ENCODE measurements at regions of chr2 and their contacts with region 1.

Region 1: DNA sequence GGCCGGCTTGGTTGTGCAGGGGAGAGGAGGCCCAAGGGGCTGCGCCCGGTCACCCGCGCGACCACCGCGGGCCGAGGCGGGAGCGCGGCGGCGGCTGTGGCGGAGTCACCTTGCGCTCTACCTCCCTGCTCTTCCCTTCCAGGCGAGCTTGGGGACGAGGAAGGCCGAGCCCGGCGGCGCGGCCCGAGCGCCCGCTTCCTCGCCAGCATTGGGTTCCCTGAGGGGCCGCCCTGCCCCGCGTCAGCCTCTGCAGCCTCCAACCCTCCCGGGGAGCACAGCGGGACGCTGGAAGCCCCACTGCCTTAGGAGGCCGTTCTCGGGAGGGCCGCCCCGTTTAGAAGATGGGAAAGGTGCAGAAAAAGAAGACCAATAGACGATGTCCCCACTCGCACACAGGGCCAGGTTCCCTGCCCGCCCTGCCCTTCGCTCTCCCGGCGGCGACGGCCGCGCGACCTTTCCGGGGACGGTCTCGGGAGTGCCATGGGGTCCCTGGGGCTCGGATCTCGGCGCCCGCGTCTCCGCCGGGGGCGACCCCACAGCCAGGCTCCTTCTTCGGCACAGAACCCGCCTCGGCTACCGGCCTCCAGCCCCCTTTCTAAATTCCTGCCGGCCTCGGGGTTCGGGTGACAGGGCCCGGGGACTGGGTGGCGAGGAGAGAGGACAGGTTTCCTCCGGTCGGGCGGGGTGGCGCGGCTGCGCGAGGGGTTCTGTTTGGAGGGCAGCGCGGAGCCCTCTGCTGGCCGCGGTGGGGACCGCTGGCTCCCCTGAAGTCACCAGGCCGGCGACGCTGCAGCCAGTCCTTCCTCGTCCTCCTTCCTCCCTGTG is 85.5 kb downstream of the HS6ST1 start:
- DNase-seq: peak; percentile 35
- ATAC-seq: peak; percentile 97
- H3K4me3 ChIP-seq: peak overlapping the region; percentile 62 to 78
- H3K27ac ChIP-seq: no peak overlapping the region; the same call in 1 of the 2 replicates
- H3K4me1 ChIP-seq: 0 out of 2 replicates have a peak, but pooled peaks cover 3% of the 10 kb centered on the region
- H3K27me3 ChIP-seq: no peaks in the 10 kb centered on the region
- CTCF ChIP-seq: peak; percentile 96

Region 2: GRCh38 chr2:128008074-128008672 is 225.0 kb before region 1 on chr2:
- CTCF ChIA-PET with region 1: no interaction called
- POLR2A ChIA-PET with region 1: no interaction called
- in situ Hi-C with region 1: no loop called
- intact Hi-C with region 1: no loop called
- DNase-seq: no peak
- ATAC-seq: no peak; the same call in 1 of the 2 replicates
- H3K4me3 ChIP-seq: no peak overlapping the region
- H3K27ac ChIP-seq: no peak overlapping the region
- H3K4me1 ChIP-seq: no peaks in the 10 kb centered on the region
- H3K27me3 ChIP-seq: no peaks in the 10 kb centered on the region
- CTCF ChIP-seq: no peak

Region 3: DNA sequence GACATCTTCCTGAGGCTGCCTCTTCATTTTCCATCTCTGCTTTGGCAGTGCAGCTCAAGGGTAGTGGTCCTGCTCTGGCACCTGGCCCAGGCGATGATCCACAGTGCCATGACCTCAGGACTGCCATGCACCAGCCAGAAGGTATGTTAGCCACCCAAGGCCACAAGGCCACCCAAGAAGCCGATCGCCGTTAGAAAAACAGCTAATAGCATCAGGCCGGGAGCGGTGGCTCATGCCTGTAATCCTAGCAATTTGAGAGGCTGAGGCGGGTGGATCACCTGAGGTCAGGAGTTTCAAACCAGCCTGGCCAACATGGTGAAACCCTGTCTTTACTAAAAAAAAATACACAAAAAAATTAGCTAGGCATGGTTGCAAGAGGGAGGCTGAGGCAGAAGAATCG is 170.6 kb before region 1 on chr2:
- CTCF ChIA-PET with region 1: no interaction called
- POLR2A ChIA-PET with region 1: no interaction called
- in situ Hi-C with region 1: no loop called
- intact Hi-C with region 1: loop called (anchors 2 kb)
- DNase-seq: no peak
- ATAC-seq: no peak
- H3K4me3 ChIP-seq: no peak overlapping the region
- H3K27ac ChIP-seq: no peak overlapping the region
- H3K4me1 ChIP-seq: no peaks in the 10 kb centered on the region
- H3K27me3 ChIP-seq: no peaks in the 10 kb centered on the region
- CTCF ChIP-seq: no peak

Region 4: DNA sequence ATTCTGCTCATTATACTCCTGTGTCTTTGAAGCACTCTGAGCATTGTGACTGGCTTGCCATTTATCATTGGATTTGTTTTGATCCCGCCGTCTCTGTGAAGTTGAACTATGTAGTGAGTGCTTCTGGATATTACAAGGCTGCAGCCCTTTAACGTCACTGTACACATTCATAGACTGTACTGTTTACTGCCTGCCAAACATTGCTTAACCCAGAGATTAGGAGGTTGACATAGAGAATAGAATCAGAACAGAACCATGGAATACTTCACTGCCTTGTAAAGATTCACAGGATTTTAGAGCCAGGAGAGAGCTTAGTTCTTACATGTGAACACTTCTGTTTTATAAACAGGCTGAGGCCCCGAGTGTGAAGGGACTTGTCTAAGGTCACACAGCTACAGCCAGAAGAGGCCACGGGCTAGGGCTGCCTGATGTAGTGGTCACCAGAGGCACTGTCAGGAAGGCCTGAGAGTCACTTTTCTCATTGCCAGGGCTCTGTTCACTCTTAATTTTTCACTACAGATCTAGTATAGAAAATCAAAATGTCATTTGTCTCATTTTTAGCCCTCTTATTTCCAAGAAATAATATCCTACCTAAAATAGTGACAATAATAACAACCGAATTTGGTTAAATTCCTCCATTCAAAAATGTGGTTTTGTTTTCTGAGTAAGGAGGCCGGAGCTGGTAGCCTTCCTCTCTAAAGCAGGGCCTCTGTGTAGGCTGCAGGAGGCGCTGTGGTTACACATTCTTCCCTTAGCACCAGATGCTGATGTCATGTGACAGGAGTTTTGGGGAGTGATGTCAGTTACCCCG is 54.3 kb before region 1 on chr2:
- CTCF ChIA-PET with region 1: no interaction called
- POLR2A ChIA-PET with region 1: no interaction called
- in situ Hi-C with region 1: no loop called
- intact Hi-C with region 1: loop called (anchors 5 kb)
- DNase-seq: no peak
- ATAC-seq: peak; percentile 85
- H3K4me3 ChIP-seq: no peak overlapping the region
- H3K27ac ChIP-seq: no peak overlapping the region
- H3K4me1 ChIP-seq: no peaks in the 10 kb centered on the region
- H3K27me3 ChIP-seq: no peaks in the 10 kb centered on the region
- CTCF ChIP-seq: peak; percentile 84

Region 5: DNA sequence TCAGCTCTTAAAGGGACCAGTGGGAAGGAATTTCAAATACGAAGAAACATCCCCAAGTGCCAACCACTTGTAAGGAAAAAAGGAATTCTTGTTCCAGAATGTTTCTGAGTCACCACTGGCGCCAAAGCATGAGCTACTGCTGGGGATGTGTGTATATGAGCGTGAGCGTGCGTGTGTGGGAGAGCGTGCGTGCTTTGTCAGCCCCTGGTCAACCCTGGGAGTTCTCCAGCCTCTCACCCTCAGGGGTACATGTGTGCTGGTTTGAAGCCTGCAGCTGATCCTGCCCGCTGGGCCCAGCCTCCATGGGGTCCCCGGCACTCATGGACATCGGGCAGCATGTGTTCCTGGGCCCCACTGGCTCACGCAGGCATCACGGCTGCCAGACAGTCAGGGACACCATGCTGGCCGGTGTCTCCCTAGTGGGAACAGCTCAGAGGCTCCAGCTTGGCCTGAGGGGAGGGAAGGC is 68.4 kb after region 1 on chr2:
- CTCF ChIA-PET with region 1: no interaction called
- POLR2A ChIA-PET with region 1: no interaction called
- in situ Hi-C with region 1: no loop called
- intact Hi-C with region 1: no loop called
- DNase-seq: no peak
- ATAC-seq: 0 out of 2 replicates have a peak, but pooled peaks have one; percentile 13
- H3K4me3 ChIP-seq: no peak overlapping the region
- H3K27ac ChIP-seq: no peak overlapping the region
- H3K4me1 ChIP-seq: peaks cover 12% of the 10 kb centered on the region
- H3K27me3 ChIP-seq: no peaks in the 10 kb centered on the region
- CTCF ChIP-seq: no peak

Region 6: DNA sequence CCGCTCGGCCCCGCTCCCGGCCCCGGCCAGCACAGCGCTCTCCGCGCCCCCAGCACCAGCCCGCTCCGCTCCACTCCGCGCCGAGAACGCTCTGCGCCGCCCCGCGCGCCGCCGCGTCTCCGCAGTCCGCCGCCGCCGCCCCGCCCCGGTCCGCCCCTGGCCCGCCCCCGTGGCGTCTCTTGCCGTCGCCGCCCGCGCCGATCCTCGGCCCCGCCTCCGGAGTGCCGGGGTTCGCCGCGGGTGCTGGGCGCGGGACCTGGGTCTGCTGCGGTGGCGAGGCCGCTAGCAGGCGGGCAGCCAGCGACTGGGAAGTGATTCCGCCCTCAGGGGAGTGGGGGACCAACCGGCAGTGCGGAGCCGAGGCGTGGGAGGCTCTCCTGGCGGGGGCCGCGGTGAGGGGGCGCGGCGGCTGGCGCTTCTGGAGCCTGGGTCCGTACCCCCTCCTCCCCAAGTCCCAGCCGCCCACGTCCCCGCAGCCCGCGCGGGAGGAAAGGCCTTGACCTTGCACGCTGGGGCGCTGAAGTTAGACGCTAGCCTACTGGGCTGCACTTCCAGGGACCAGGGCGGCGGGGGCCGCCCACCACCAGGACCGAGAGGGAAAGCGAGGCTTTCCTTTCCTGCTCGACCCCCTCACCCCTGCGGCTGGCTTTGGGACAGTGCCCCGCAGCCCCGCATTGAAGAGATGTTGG is 85.7 kb after region 1 on chr2 and contains the start of gene HS6ST1:
- CTCF ChIA-PET with region 1: no interaction called
- POLR2A ChIA-PET with region 1: no interaction called
- in situ Hi-C with region 1: no loop called
- intact Hi-C with region 1: loop called (anchors 5 kb)
- DNase-seq: no peak
- ATAC-seq: peak; percentile 88
- H3K4me3 ChIP-seq: peak within 1 kb of the TSS; percentile 59 to 63
- H3K27ac ChIP-seq: peak within 1 kb of the TSS; percentile 48; the same call in 1 of the 2 replicates
- H3K4me1 ChIP-seq: peaks cover 12% of the 10 kb centered on the region
- H3K27me3 ChIP-seq: no peaks in the 10 kb centered on the region
- CTCF ChIP-seq: no peak
- total RNA-seq, gene HS6ST1: 22.0 TPM

Region 7: DNA sequence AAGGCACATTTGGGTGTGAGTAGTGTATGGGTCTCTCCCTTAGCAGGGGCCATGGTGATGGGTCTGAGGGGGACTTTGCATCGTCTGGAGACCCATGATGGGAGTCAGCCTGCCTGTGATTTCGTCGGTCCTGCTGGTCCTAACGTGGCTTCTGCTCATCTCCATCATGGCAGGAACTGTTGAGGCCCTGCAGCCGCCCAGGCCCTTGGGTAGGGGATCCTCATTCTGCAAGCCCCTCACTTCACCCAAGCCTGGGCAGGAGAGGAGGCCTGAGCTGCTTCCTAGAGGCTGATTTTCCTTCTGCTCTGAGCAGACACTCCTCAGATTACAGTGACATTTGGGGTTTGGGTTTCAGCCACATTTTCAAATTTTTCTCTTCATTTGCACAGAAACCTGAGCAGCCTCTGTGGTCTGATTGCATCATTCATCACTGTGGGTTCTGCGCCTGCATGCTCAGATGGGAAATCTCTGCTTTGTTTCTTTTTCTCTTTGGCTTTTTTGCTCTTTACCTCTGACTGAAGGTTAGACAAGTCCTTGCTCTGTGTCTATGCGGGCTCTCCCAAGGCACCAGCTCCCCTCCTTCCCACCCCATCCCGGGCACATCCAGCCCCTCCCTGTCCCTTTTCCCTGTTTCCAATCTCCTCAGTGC is 390.7 kb after region 1 on chr2:
- CTCF ChIA-PET with region 1: no interaction called
- POLR2A ChIA-PET with region 1: no interaction called
- in situ Hi-C with region 1: no loop called
- intact Hi-C with region 1: no loop called
- DNase-seq: no peak
- ATAC-seq: no peak
- H3K4me3 ChIP-seq: no peak overlapping the region
- H3K27ac ChIP-seq: no peak overlapping the region
- H3K4me1 ChIP-seq: no peaks in the 10 kb centered on the region
- H3K27me3 ChIP-seq: no peaks in the 10 kb centered on the region
- CTCF ChIP-seq: no peak